HepG2 (cell line): ENCODE measurements at regions of chr4 and their contacts with region 1.

Region 1: GRCh38 chr4:41757521-41758156 is 9.1 kb upstream of the PHOX2B start:
- DNase-seq: no peak
- ATAC-seq: no peak
- H3K4me3 ChIP-seq: no peak overlapping the region
- H3K27ac ChIP-seq: no peak overlapping the region
- H3K4me1 ChIP-seq: no peaks in the 10 kb centered on the region
- H3K27me3 ChIP-seq: peaks cover 0 to 3% of the 10 kb centered on the region in 2 experiments; a peak in 1 of 5 replicates
- CTCF ChIP-seq: no peak
- EP300 ChIP-seq: no peak
- POLR2A ChIP-seq: no peak
- RAD21 ChIP-seq: no peak

Region 2: DNA sequence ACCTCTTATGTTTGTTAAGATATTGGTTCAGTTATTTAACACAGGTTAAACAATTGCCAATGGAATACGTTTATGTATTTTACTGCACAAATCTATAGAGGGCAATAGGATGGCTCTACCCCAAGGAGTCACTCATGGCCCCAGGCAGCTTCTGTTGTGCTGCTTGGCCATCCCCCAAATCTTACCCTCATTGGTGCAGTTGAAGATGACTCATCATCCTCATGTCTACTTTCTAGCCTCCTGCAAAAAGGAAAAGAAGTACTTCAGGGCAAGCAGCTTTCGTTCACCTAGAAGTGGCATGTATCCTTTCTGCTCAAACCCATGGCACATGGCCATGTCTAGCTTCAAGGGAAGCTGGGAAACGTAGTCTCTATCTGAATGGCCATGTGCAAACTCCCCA is 23.3 kb before region 1 on chr4:
- CTCF ChIA-PET with region 1: no interaction called
- POLR2A ChIA-PET with region 1: no interaction called
- in situ Hi-C with region 1: no loop called
- intact Hi-C with region 1: loop called (anchors 1 kb)
- DNase-seq: no peak
- ATAC-seq: no peak
- H3K4me3 ChIP-seq: no peak overlapping the region
- H3K27ac ChIP-seq: no peak overlapping the region
- H3K4me1 ChIP-seq: no peaks in the 10 kb centered on the region
- H3K27me3 ChIP-seq: peaks cover 0 to 4% of the 10 kb centered on the region in 2 experiments; a peak in 3 of 5 replicates
- CTCF ChIP-seq: no peak
- EP300 ChIP-seq: no peak
- POLR2A ChIP-seq: no peak
- RAD21 ChIP-seq: no peak

Region 3: DNA sequence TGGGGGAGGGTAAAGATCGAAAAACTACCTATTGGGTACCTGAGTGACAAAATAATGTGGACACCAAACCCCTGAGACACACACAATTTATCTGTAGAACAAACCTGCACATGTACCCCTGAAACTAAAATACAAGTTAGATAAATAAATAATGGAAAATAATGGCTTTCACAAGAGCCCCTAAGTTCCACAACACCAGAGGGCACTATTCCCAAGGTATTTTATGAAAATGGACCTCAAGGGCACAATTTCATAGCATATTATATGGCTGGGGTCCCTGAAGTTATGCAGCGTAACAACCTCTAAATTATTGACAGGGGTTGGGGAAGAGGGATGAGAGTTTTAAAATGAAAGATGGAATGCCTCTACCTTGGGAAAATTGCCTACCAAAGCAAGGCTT is 96.3 kb after region 1 on chr4:
- CTCF ChIA-PET with region 1: no interaction called
- POLR2A ChIA-PET with region 1: no interaction called
- in situ Hi-C with region 1: no loop called
- intact Hi-C with region 1: no loop called
- DNase-seq: peak; percentile 1
- ATAC-seq: no peak
- H3K4me3 ChIP-seq: no peak overlapping the region
- H3K27ac ChIP-seq: no peak overlapping the region
- H3K4me1 ChIP-seq: no peaks in the 10 kb centered on the region
- H3K27me3 ChIP-seq: peaks cover 0 to 7% of the 10 kb centered on the region in 2 experiments; a peak in 1 of 5 replicates
- CTCF ChIP-seq: no peak; the same call in 1 of the 2 replicates
- EP300 ChIP-seq: no peak
- POLR2A ChIP-seq: no peak
- RAD21 ChIP-seq: no peak